ENCODE measurements at regions of chr10 and their contacts with region 1.

Region 1: DNA sequence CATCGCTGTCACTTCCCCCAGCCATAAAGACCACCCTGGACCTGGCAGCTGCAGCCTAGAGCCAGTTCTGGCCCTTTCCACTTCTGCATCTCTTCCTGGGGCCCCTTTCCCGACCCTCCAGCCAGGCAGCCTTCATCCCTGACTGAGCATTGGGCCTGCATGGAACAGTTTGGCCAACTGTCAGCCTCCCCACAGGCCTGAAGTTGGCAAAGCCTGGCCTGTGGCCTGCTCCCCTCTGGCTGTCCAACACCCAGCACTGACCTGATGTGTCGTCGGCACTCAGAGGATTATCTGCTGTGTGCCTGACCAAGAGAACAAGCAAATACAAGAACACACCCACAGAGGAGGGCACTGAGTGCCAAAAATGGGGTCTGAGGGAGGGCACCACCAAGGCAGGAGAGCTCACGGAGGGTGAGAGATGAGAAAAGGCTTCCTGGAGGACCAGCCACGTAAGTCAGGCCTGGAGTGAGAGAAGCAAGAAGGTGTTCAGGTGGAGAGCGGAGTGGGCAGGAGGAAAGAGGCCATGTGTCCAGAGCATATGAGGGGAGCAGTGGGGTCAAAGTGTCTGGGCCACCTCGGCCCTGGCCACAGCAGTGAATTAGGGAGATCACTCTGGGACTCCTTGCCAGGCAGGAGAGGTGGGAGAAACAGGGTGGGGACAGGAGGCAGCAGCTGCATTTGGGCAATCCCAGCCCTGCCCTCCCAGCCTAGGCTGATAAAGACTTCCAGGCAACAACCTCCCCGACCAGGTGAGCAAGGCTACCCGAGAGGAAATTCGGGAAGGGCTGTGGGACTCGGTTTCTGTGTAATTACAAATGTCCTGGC is 4.5 kb downstream of the GPRIN2 start:
- DNase-seq: peak in 1 of 2 donors; percentile 60
- H3K4me3 ChIP-seq: no peak overlapping the region
- H3K27ac ChIP-seq: no peak overlapping the region
- H3K4me1 ChIP-seq: peaks cover 9 to 10% of the 10 kb centered on the region in 2 donors
- H3K27me3 ChIP-seq: peaks cover 14% of the 10 kb centered on the region
- CTCF ChIP-seq: no peak

Region 2: DNA sequence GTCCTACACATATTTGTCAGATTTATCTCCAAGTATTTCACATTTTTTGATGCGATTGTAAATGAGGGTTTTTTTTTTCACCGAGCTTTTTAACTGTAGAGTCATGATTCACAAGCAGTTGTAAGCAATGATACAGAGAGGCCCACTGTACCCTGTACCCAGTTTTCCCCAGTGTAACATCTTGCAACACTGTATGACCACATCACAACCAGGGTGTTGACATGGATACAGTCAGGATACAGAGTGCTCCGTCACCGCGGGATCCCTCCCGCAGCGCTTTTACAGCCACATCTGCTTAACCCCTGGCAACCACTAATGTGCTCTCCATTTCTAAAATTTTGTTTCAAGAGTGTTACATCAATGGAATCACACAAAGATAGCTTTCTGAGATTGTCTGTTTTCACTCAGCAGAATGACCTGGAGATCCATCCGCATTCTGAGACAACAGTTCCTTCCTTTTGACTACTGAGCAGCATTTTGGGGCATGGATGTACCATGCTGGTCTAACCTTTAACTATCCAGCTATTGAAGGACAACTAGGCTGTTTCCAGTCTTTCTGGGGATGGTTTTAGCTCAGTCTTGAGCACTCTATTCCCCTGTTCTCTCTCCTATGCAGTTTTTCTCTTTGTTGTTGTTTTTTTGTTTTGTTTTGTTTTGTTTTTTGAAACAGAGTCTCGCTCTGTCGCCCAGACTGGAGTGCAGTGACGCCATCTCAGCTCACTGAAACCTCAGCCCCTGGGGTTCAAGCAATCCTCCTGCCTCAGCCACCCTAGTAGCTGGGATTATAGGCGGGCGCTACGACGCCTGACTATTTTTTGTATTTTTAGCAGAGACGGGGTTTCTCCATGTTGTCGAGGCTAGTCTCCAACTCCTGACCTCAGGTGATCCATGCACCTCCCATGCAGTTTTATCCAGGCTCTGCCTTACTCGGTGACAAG is 21.4 kb before region 1 on chr10:
- intact Hi-C with region 1: loop called (anchors 2 kb)
- DNase-seq: no peak
- H3K4me3 ChIP-seq: no peak overlapping the region
- H3K27ac ChIP-seq: no peak overlapping the region
- H3K4me1 ChIP-seq: no peaks in the 10 kb centered on the region
- H3K27me3 ChIP-seq: no peaks in the 10 kb centered on the region
- CTCF ChIP-seq: no peak